Right lobe of liver (tissue), 6 donors: ENCODE measurements at regions of chr3 and their contacts with region 1.

Region 1: DNA sequence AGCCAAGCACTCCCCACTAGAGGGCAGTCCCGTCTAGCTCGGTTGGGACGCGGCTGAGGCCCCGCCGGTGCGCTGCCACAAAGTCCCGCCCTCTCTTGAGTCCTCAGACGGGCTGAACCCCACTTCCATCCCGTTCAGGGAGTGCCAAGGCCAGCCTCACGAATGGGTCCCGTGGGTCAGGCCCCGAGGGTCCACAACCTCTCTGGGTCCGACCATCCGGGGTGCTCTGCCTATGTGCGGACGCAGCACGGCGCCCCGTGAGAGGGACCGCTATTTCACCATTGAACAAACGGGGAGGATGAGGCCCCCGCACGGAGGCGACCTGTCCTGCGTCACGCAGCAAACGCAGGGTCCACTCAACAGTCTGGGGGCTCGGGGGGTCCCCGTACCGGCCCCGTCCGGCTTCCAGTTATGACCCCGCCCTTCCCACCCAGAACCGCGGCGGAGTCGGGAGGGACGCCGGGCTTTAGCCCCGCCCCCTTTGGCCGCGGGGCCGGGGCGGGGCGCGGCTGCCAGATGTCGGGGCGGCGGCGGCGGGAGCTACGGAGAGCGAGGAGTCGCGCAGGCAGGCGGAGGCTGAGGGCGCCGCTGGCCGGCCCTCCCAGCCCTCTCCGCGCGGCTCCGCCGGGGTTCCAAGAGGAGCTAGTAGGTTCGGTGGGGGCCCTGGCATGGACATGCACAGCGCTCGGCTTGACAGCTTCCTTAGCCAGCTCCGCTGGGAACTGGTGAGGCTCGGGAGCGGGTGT is at the start of gene INKA1:
- DNase-seq: peak; percentile 92 to 93 (median 93)
- ATAC-seq: peak; percentile 87 to 91 (median 89)
- H3K4me3 ChIP-seq: peak within 1 kb of the TSS; percentile 67 to 97 (median 69)
- H3K27ac ChIP-seq: peak within 1 kb of the TSS; percentile 42 to 69 (median 63)
- H3K4me1 ChIP-seq: peaks cover 0 to 6% (median 0%) of the 10 kb centered on the region in 4 donors
- H3K27me3 ChIP-seq: no peaks in the 10 kb centered on the region
- CTCF ChIP-seq: peak; percentile 87 to 92 (median 90)
- POLR2A ChIP-seq: peak; percentile 46
- total RNA-seq, gene INKA1: 0.46 to 1.2 (median 0.73) TPM

Region 2: GRCh38 chr3:49906004-49906743 is 103.3 kb after region 1 on chr3:
- intact Hi-C with region 1: loop called in 1 of 2 experiments (anchors 10 kb)
- DNase-seq: peak in 1 of 3 donors; percentile 58
- ATAC-seq: peak; percentile 56 to 74 (median 58)
- H3K4me3 ChIP-seq: peak overlapping the region in 1 of 3 donors; percentile 21
- H3K27ac ChIP-seq: no peak overlapping the region
- H3K4me1 ChIP-seq: peaks cover 0 to 4% (median 0%) of the 10 kb centered on the region in 4 donors
- H3K27me3 ChIP-seq: no peaks in the 10 kb centered on the region
- CTCF ChIP-seq: peak; percentile 52 to 69 (median 58)
- POLR2A ChIP-seq: no peak